Heart right ventricle (tissue), 16 donors: ENCODE measurements at regions of chr9 and their contacts with region 1.

Region 1: GRCh38 chr9:32468740-32469139 is 57.3 kb downstream of the RIGI start:
- DNase-seq: no peak
- ATAC-seq: no peak
- H3K4me3 ChIP-seq: no peak overlapping the region
- H3K27ac ChIP-seq: no peak overlapping the region
- H3K4me1 ChIP-seq: no peaks in the 10 kb centered on the region
- H3K27me3 ChIP-seq: no peaks in the 10 kb centered on the region
- CTCF ChIP-seq: no peak

Region 2: GRCh38 chr9:31894008-31894407 is 574.7 kb before region 1 on chr9:
- intact Hi-C with region 1: no loop called
- DNase-seq: no peak
- ATAC-seq: no peak
- H3K4me3 ChIP-seq: no peak overlapping the region
- H3K27ac ChIP-seq: no peak overlapping the region
- H3K4me1 ChIP-seq: no peaks in the 10 kb centered on the region
- H3K27me3 ChIP-seq: no peaks in the 10 kb centered on the region
- CTCF ChIP-seq: no peak

Region 3: GRCh38 chr9:32426278-32426939 is 42.3 kb before region 1 on chr9:
- intact Hi-C with region 1: loop called in 1 of 10 experiments (anchors 10 kb)
- DNase-seq: no peak
- ATAC-seq: peak in 4 of 8 donors; percentile 26 to 64 (median 50)
- H3K4me3 ChIP-seq: no peak overlapping the region
- H3K27ac ChIP-seq: no peak overlapping the region
- H3K4me1 ChIP-seq: peaks cover 0 to 13% (median 0%) of the 10 kb centered on the region in 9 donors
- H3K27me3 ChIP-seq: no peaks in the 10 kb centered on the region
- CTCF ChIP-seq: no peak

Region 4: GRCh38 chr9:32508728-32509127 is 40.0 kb after region 1 on chr9:
- intact Hi-C with region 1: loop called in 1 of 10 experiments (anchors 5 kb)
- DNase-seq: no peak
- ATAC-seq: no peak
- H3K4me3 ChIP-seq: no peak overlapping the region
- H3K27ac ChIP-seq: no peak overlapping the region
- H3K4me1 ChIP-seq: peaks cover 0 to 17% (median 0%) of the 10 kb centered on the region in 9 donors
- H3K27me3 ChIP-seq: no peaks in the 10 kb centered on the region
- CTCF ChIP-seq: no peak